ENCODE measurements at regions of chr1 and their contacts with region 1.

Region 1: GRCh38 chr1:150621497-150622302 is 7.7 kb downstream of the ENSA start:
- DNase-seq: peak; percentile 77
- H3K4me3 Mint-ChIP-seq: no peak overlapping the region
- H3K27ac Mint-ChIP-seq: peak overlapping the region; percentile 78
- H3K4me1 Mint-ChIP-seq: peaks cover 60% of the 10 kb centered on the region
- H3K27me3 Mint-ChIP-seq: no peaks in the 10 kb centered on the region

Region 2: GRCh38 chr1:150578965-150579798 is 42.5 kb before region 1 on chr1 and contains the start of gene MCL1:
- CTCF ChIA-PET with region 1: interaction called, 36 read pairs
- DNase-seq: peak; percentile 94
- H3K4me3 Mint-ChIP-seq: peak within 1 kb of the TSS; percentile 96
- H3K27ac Mint-ChIP-seq: peak within 1 kb of the TSS; percentile 96
- H3K4me1 Mint-ChIP-seq: peaks cover 29% of the 10 kb centered on the region
- H3K27me3 Mint-ChIP-seq: no peaks in the 10 kb centered on the region